ENCODE measurements at regions of chr4 and their contacts with region 1.

Region 1: DNA sequence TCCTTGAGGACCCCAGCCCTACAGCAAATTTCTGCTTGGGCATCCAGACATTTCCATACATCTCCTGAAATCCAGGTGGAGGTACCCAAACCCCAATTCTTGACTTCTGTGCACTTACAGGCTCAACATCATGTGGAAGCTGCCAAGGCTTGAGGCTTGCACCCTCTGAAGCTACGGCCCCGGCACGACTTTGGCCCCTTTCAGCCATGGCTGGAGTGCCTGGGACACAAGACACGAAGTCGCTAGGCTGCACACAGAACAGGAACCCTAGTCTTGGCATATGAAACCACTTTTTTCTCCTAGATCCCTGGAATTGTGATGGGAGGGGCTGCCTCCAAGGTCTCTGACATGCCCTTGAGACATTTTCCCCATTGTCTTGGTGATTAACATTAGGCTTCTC is 1417.7 kb downstream of the ARAP2 start:
- DNase-seq: no peak
- ATAC-seq: no peak
- H3K4me3 ChIP-seq: no peak overlapping the region
- H3K27ac ChIP-seq: no peak overlapping the region
- H3K4me1 ChIP-seq: no peaks in the 10 kb centered on the region
- H3K27me3 ChIP-seq: no peaks in the 10 kb centered on the region
- CTCF ChIP-seq: no peak
- POLR2A ChIP-seq: no peak

Region 2: DNA sequence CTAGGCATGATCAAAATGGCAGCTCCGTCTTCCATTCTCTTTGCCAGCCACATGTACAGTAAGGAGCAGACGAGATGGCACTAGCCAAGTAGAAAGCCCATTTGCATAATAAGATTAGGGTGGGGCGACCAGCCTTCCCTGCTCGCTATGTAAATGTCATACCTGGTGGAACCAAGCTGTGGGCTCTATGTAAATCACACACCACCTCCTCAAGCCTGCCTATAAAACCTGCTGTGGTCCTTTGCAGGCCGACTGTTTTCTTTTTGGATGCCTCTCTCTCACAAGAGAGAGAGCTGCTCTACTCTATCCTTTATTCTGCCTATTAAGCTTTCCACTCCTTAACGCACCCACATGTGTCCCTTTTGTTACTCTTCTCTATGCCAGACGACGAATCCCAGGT is 55.0 kb before region 1 on chr4:
- intact Hi-C with region 1: loop called in 5 of 10 experiments (anchors 2 to 5 kb)
- DNase-seq: no peak
- ATAC-seq: no peak
- H3K4me3 ChIP-seq: no peak overlapping the region
- H3K27ac ChIP-seq: no peak overlapping the region
- H3K4me1 ChIP-seq: no peaks in the 10 kb centered on the region
- H3K27me3 ChIP-seq: no peaks in the 10 kb centered on the region
- CTCF ChIP-seq: no peak
- POLR2A ChIP-seq: no peak

Measured in heart left ventricle (tissue), 16 donors.